Left cardiac atrium (tissue), 4 donors: ENCODE measurements at regions of chr2 and their contacts with region 1.

Region 1: DNA sequence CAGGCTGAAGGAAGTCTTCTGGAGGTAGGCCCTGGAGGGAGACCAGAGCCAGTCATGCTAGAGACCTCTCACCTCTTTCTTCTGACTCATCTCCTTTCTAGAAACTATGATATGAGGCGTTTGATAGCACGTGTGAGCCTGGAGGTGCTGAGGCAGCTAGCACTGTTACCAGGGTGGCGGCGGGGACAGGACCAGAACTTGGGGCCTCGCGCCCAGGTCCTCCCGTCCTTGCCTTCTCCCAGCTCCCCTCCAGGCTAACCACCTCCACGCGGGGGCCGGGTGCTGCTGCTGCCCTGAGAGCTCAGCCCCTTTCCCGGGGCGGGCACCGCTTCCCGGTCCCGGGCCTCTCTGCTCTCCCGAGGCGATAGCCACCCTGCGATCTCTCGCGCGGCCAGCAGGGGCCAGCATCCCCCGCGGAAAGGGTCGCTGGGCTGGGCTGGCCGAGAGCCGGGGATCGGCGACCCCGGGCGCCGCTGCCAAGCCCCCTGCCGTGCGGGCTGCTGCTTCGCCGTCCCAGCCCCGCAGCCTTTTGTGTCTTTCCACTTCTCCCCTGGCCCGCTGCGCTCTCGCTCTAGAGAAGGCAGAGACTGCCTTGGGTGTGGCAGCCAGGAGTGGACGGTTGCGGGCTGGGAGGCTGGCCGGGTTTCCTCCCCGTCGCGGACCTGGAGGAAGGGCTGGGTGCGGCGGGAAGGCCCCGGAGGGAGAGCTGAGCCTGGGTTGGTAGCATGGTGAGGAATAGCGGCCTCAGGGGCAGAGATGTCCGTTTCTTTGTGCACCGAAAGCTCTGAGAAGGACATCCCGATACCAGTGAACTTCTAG is 49.1 kb downstream of the TMEM17 start:
- DNase-seq: peak; percentile 75
- ATAC-seq: peak; percentile 90 to 92

Region 2: GRCh38 chr2:62705007-62705829 is 248.3 kb after region 1 on chr2 and contains the start of gene EHBP1:
- intact Hi-C with region 1: loop called in 1 of 2 experiments (anchors 5 kb)
- DNase-seq: peak; percentile 98
- ATAC-seq: peak; percentile 98 to 99
- total RNA-seq, gene EHBP1: 34.0 to 41.9 TPM

Region 3: DNA sequence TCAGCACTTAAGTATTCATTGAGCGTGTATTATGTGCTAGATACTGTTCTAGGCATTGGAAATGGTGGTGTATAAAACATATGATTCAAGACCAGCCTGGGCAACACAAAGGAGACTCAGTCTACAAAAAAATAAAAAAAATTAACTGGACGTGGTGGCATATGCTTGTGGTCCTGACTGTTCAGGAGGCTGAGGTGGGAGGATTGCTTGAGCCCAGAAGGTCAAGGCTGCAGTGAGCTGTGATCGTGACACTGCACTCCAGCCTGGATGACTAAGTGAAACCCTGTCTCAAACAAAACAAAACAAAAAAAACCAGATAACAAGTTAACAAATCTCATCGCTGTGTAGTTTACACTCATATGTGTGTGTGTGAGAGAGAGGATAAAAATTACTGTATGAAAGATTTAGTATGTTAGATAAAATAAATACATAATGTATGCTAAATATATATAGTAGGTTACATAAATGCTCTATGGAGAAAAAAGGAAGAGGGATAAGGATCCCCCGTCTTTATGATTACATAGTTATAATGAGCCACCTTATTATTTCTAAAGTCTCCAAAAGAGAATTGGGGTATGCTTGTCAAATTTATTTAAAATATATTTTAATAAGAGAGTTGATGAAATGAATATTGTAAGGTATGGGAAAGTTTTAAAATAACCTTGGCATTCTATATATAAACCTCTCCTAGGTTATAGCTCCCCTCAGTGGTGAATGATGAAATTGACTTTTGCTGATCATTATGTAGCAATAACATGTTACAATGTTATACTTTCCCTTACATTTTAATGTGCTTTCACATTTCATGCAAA is 317.8 kb after region 1 on chr2:
- intact Hi-C with region 1: loop called (anchors 1 to 2 kb)
- DNase-seq: no peak
- ATAC-seq: peak in 1 of 2 donors; percentile 78